Activated CD8-positive, alpha-beta T cell treated with anti-CD3 and anti-CD28 coated beads for 36 hours (primary cell): ENCODE measurements at regions of chr1 and their contacts with region 1.

Region 1: DNA sequence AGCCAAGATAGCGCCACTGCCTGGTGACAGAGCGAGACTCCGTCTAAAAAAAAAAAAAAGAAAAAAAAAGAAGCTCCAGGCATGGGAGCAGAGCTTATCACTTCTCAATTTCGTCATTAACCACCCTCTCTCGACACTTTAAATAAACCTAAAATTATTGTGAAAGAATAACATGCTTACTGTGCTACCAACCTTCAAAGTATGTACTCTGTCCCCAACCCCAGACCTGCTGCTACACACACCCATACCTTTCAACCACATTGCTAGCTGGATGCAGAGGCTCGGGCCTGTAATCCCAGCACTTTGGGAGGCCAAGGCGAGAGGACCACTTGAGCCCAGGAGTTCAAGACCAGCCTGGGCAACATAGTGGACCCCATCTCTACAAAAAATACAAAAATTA is 38.7 kb downstream of the GNPAT start:
- DNase-seq: no peak
- ATAC-seq: no peak
- H3K4me3 Mint-ChIP-seq: no peak overlapping the region
- H3K27ac Mint-ChIP-seq: no peak overlapping the region
- H3K4me1 Mint-ChIP-seq: peaks cover under 1% of the 10 kb centered on the region
- H3K27me3 Mint-ChIP-seq: no peaks in the 10 kb centered on the region
- CTCF ChIP-seq: no peak

Region 2: DNA sequence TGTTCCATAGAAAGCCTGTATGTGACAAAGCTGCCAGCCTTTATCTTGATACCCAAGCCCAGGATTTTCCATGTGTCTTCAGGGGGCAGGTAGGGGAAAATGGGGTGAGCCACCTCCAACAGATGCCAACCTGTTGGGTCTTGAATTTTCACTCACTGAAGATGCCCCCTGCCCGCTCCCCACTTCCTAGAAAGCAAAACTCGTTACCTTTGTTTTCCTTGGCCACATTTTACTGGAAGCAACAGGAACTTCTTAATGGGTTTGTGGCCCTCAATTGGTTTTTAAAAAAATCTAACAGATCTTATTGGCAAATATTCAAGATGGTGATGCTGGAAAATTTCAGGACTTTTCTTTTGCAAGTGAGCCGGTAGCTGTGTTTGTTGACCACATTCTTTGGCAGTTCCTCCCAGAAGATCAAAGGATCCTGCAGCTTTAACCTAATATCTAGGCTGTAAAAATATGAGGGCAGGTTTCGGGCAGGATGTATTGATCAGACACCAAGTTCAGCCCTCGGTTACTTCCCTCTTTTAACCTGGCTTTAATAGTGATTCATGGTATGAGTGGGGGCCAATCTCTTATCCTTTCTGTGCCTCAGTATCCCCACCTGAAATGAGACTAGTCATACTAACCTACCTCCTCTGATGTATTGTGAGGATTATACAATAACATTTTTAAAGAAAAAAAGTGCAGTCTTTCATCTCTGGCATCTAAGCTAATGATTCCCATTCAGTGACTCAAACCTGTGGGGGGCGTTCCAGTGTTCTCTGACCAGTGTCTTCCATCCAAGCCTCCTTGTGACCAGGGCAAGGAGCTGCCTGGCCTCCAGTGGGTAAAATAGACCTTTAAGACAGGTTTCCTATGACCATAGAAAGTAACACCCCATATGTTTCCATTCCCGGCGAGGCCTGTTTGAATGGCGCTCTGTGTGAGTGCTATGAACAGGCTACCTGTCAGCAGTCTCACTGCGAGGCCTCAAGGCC is 60.0 kb before region 1 on chr1:
- CTCF ChIA-PET with region 1: no interaction called
- POLR2A ChIA-PET with region 1: no interaction called
- intact Hi-C with region 1: loop called (anchors 10 kb)
- DNase-seq: no peak
- ATAC-seq: no peak
- H3K4me3 Mint-ChIP-seq: no peak overlapping the region
- H3K27ac Mint-ChIP-seq: no peak overlapping the region
- H3K4me1 Mint-ChIP-seq: peaks cover 16% of the 10 kb centered on the region
- H3K27me3 Mint-ChIP-seq: no peaks in the 10 kb centered on the region
- CTCF ChIP-seq: no peak

Region 3: GRCh38 chr1:231295938-231296337 is 16.3 kb after region 1 on chr1:
- CTCF ChIA-PET with region 1: no interaction called
- POLR2A ChIA-PET with region 1: no interaction called
- intact Hi-C with region 1: no loop called
- DNase-seq: no peak
- ATAC-seq: no peak
- H3K4me3 Mint-ChIP-seq: no peak overlapping the region
- H3K27ac Mint-ChIP-seq: no peak overlapping the region
- H3K4me1 Mint-ChIP-seq: no peaks in the 10 kb centered on the region
- H3K27me3 Mint-ChIP-seq: no peaks in the 10 kb centered on the region
- CTCF ChIP-seq: no peak